ENCODE measurements at regions of chr6 and their contacts with region 1.

Region 1: GRCh38 chr6:10411971-10412745 is 2.7 kb downstream of the TFAP2A start:
- DNase-seq: peak; percentile 86
- H3K4me3 ChIP-seq: peak overlapping the region; percentile 91
- H3K27me3 ChIP-seq: no peaks in the 10 kb centered on the region
- CTCF ChIP-seq: no peak

Region 2: GRCh38 chr6:8652710-8653109 is 1759.4 kb before region 1 on chr6:
- CTCF ChIA-PET with region 1: no interaction called
- POLR2A ChIA-PET with region 1: interaction called, 10 read pairs
- DNase-seq: no peak
- H3K4me3 ChIP-seq: no peak overlapping the region
- H3K27me3 ChIP-seq: no peaks in the 10 kb centered on the region
- CTCF ChIP-seq: no peak

Region 3: DNA sequence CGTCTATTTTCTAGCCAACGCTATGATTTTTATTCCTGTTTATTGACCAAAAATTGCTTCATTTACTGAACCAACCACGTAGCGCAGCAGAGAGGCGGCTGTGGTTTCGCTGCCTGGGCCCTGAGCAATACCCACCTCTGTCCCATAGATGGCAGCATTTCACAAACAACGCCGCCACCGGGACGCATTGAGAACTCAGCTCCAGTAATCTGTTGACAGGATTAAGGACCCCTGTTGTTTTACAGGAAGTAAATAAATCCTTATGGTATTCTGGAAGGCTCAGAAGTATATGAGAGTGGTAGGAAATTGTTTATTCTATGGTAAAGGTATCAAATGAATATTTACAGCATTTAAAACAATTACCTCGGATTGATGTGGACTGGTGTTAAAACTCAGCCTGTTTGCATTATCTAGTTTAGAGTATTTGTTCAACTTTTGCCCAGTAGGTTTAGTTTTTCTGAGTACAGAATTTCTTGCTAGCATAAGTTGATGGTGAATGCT is 1428.9 kb before region 1 on chr6:
- CTCF ChIA-PET with region 1: interaction called, 11 read pairs
- POLR2A ChIA-PET with region 1: no interaction called
- DNase-seq: peak; percentile 12
- H3K4me3 ChIP-seq: 0 out of 2 replicates have a peak overlapping the region, but pooled peaks have one; percentile 14
- H3K27me3 ChIP-seq: no peaks in the 10 kb centered on the region
- CTCF ChIP-seq: peak; percentile 95

Region 4: DNA sequence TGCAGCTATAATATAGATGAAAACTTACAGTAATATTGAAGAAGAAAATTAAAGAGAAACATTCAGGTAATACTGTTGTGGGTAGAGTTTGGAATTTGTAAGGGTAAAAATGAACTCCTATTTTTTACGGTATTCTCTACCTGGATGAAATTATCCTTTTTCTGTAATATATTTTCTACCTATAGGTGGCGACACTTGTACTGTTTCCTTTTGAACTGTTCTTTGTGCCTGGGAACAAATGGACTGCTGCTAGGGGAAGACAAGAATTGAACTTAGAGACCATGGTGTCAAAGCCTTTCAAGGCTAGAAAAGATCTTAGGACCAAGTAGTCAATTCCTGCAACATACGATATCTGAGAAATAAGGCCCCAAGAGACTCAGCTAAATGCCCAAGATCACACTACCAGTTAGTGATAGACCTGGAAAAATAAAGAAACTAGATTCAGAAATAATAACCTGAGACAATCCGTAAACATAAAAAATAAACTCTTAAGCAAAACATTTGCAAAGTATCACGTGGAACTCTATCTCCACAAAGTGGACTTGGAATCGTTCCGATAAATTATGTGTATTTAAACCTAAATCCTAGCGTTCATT is 381.1 kb before region 1 on chr6:
- CTCF ChIA-PET with region 1: interaction called, 25 read pairs
- POLR2A ChIA-PET with region 1: no interaction called
- DNase-seq: no peak
- H3K4me3 ChIP-seq: no peak overlapping the region
- H3K27me3 ChIP-seq: no peaks in the 10 kb centered on the region
- CTCF ChIP-seq: peak; percentile 51

Region 5: GRCh38 chr6:10397756-10398424 is 14.3 kb before region 1 on chr6:
- CTCF ChIA-PET with region 1: interaction called, 17 read pairs
- POLR2A ChIA-PET with region 1: no interaction called
- DNase-seq: no peak
- H3K4me3 ChIP-seq: 0 out of 2 replicates have a peak overlapping the region, but pooled peaks have one; percentile 7
- H3K27me3 ChIP-seq: no peaks in the 10 kb centered on the region
- CTCF ChIP-seq: no peak

Region 6: GRCh38 chr6:10429638-10430427 is 17.7 kb after region 1 on chr6:
- CTCF ChIA-PET with region 1: interaction called, 68 read pairs
- POLR2A ChIA-PET with region 1: interaction called, 16 read pairs
- DNase-seq: no peak
- H3K4me3 ChIP-seq: peak overlapping the region; percentile 3; the same call in 1 of the 2 replicates
- H3K27me3 ChIP-seq: no peaks in the 10 kb centered on the region
- CTCF ChIP-seq: peak; percentile 53